ENCODE measurements at regions of chr9 and their contacts with region 1.

Region 1: GRCh38 chr9:136488247-136489214 is 5.7 kb upstream of the SEC16A start:
- DNase-seq: peak; percentile 54 to 57
- ATAC-seq: peak; percentile 35 to 58; a peak in 4 of 6 replicates
- H3K4me3 ChIP-seq: no peak overlapping the region
- H3K27ac ChIP-seq: no peak overlapping the region
- H3K4me1 ChIP-seq: peaks cover 9% of the 10 kb centered on the region
- CTCF ChIP-seq: peak; percentile 96
- EP300 ChIP-seq: no peak
- POLR2A ChIP-seq: no peak
- RAD21 ChIP-seq: peak; percentile 98

Region 2: DNA sequence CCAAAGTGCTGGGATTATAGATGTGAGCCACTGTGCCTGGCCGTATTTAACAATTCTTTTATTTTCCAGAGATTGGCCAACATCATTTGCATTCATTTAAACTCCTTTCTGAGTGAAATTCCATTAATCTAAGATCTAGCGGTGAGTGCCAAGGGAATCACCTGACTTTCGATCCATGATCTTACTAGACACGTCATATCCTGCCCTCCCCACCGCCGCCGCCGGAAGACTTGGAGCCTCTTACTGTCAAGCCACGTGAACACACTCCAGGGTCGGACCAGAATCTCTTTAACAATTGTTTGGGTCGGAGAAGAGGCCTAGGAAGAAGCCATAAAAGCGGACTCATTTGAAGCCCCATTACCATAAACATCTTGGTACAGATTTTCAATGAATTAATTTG is 61.7 kb before region 1 on chr9:
- CTCF ChIA-PET with region 1: no interaction called
- POLR2A ChIA-PET with region 1: no interaction called
- DNase-seq: no peak
- ATAC-seq: no peak
- H3K4me3 ChIP-seq: no peak overlapping the region
- H3K27ac ChIP-seq: no peak overlapping the region
- H3K4me1 ChIP-seq: no peaks in the 10 kb centered on the region
- CTCF ChIP-seq: no peak
- EP300 ChIP-seq: no peak
- POLR2A ChIP-seq: no peak
- RAD21 ChIP-seq: no peak

Region 3: GRCh38 chr9:136527721-136528691 is 39.5 kb after region 1 on chr9:
- CTCF ChIA-PET with region 1: interaction called, 35 read pairs
- POLR2A ChIA-PET with region 1: no interaction called
- DNase-seq: peak; percentile 45 to 48
- ATAC-seq: peak; percentile 32 to 66; a peak in 5 of 6 replicates
- H3K4me3 ChIP-seq: no peak overlapping the region
- H3K27ac ChIP-seq: peak overlapping the region; percentile 62 to 83
- H3K4me1 ChIP-seq: peaks cover 42% of the 10 kb centered on the region
- CTCF ChIP-seq: no peak
- EP300 ChIP-seq: no peak
- POLR2A ChIP-seq: no peak
- RAD21 ChIP-seq: 0 out of 5 replicates have a peak, but pooled peaks of 1 of the 2 experiments have one; percentile 12

Region 4: DNA sequence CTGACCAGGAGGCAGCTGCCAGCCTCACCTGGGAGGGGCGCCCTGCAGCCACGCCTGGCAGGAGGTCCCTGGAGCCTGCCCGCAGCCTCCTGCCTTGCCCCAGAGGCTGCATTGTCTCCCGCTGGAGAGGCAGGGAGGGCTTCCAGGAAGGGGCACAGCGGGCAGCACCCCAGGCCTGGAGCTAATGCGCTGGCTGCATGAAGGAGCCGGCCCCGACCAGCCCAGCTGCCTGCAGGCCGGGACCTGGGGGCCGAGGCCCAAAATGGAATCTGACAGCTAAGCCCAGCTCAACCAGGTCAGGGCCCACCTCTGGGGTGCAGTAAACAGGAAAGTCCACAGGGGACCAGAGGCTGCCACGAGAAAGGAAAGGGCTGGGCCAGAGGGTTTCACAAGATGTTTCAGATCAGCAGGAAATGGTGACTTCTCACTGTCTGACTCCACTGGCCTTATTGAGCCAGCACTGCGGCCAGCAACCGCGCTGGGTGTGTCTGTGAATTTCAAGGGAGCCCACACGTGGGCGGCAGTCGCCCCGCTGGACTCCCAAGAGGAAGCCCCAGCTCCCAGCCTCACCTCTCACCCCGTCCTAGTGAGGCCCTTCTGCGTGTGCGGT is 76.0 kb after region 1 on chr9:
- CTCF ChIA-PET with region 1: interaction called, 28 read pairs
- POLR2A ChIA-PET with region 1: no interaction called
- DNase-seq: no peak
- ATAC-seq: peak; percentile 45 to 55
- H3K4me3 ChIP-seq: no peak overlapping the region
- H3K27ac ChIP-seq: peak overlapping the region in 1 of 2 experiments; percentile 42; a peak in 3 of 6 replicates
- H3K4me1 ChIP-seq: peaks cover 30% of the 10 kb centered on the region
- CTCF ChIP-seq: no peak
- EP300 ChIP-seq: no peak
- POLR2A ChIP-seq: no peak
- RAD21 ChIP-seq: 0 out of 5 replicates have a peak, but pooled peaks of 1 of the 2 experiments have one; percentile 4

Region 5: DNA sequence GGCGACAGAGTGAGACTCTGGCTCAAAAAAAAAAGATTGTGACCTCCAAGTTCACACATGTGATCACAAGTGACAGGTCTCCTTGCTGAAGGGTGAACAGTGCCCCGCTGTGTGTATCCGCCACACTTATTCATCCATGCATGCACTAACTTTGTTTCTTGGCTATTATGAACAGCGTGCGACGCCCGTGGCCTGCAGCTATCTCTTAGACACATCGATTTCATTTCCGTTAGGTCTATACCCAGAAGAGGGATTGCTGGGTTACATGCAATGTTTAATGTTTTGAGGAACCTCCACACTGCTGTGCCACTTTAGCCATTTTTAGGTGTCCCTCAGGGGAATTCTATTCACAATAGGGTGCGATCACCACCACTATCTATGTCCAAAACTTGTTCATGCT is 162.1 kb after region 1 on chr9:
- CTCF ChIA-PET with region 1: interaction called, 313 read pairs
- POLR2A ChIA-PET with region 1: no interaction called
- DNase-seq: no peak
- ATAC-seq: no peak
- H3K4me3 ChIP-seq: no peak overlapping the region
- H3K27ac ChIP-seq: no peak overlapping the region
- H3K4me1 ChIP-seq: no peaks in the 10 kb centered on the region; the same call in 2 of the 3 replicates
- CTCF ChIP-seq: no peak
- EP300 ChIP-seq: no peak
- POLR2A ChIP-seq: no peak
- RAD21 ChIP-seq: no peak

Region 6: GRCh38 chr9:137000177-137000883 is 511.8 kb after region 1 on chr9:
- CTCF ChIA-PET with region 1: no interaction called
- POLR2A ChIA-PET with region 1: no interaction called
- DNase-seq: no peak
- ATAC-seq: no peak
- H3K4me3 ChIP-seq: no peak overlapping the region
- H3K27ac ChIP-seq: 0 out of 6 replicates have a peak overlapping the region, but pooled peaks of 1 of the 2 experiments have one; percentile 15
- H3K4me1 ChIP-seq: peaks cover 41% of the 10 kb centered on the region
- CTCF ChIP-seq: no peak
- EP300 ChIP-seq: no peak
- POLR2A ChIP-seq: no peak
- RAD21 ChIP-seq: no peak

Measured in A549 (cell line).